ENCODE measurements at regions of chr6 and their contacts with region 1.

Region 1: DNA sequence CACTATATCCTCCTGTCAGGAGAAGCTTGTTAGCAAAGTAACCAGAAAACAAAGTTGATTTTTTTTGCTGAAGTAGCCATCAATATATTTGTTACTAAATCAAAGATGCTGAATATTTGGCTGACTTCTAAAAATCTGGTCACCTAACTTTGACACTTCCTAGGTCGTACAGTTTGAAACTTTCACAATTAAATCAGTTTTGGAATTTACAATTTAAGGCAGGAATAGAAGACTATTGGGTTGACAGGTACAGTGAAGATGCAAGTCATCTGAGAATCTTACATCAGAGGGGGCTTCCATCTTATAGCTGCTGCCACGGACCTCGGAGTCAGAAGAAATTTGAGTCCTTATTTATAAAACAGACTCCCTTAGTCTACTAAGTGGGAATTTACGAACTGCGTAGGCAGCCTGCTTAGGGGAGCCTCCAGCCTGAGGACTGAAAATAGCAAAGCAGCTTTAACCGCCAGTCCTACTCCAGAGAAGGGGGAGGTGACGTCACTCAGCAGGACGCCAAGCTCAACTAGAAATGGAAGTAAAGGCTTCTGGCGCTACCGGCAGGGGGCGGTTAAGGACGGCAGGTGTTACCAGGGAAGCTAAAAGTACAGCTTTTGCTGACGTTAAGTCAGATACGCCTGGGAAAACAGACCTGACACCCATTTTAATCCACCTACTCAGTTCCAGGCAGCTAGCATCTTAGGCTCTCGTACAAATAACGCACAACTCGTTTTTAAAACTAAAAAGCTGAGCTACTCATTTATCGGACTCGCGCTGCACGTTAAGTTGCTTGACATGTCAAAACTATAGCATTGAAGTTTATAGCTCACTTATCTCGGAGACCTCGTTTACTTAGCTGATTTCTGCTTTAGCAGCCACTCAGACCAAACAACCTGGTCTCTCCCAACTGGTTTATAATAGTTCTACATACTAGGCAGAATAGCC is 61.1 kb upstream of the HFE start:
- DNase-seq: no peak
- H3K4me3 ChIP-seq: peak overlapping the region; percentile 84
- CTCF ChIP-seq: peak; percentile 90

Region 2: DNA sequence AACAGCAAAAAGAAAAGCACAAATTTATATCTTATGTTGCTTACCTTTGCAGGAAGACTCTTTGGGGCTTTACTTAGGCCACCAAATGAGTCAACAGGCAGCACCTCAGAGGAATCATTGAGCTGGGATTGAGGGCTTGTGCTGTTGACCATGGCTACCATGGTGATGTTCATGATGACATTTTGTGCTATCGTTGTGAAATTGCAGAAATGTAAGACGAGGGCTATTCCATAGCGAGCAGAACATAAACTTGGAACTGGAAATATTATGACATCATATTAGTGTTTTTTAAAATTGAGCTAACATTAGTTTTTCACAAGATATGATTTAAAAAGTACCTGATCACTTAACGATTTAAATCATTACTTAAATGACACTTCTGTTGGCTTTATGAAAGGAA is 164.0 kb before region 1 on chr6:
- CTCF ChIA-PET with region 1: no interaction called
- POLR2A ChIA-PET with region 1: no interaction called
- DNase-seq: no peak
- H3K4me3 ChIP-seq: no peak overlapping the region
- CTCF ChIP-seq: no peak

Region 3: DNA sequence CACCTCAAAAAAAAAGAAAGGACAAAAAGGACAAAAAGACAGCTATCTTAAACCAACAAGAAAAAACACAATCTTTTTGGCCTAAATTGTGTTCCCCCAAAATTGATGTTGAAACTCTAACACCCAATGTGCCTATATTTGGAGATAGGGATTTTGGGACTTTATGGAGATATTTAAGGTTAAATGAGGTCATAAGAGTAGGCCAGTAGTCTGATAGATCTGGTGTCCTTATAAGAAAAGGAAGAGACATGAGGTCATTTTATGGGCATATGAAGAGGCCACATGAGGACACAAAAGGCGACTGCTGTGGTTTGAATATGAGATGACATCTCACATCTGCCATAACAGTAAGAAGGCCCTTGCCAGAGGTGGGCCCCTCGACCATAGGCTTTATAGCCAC is 14.1 kb before region 1 on chr6:
- CTCF ChIA-PET with region 1: interaction called, 283 read pairs
- POLR2A ChIA-PET with region 1: interaction called, 15 read pairs
- DNase-seq: no peak
- H3K4me3 ChIP-seq: no peak overlapping the region
- CTCF ChIP-seq: no peak

Measured in AG04449 (cell line).